ENCODE measurements at regions of chr1 and their contacts with region 1.

Region 1: GRCh38 chr1:40449684-40450494 is at the start of gene ZFP69B:
- DNase-seq: peak; percentile 94
- H3K4me3 Mint-ChIP-seq: peak within 1 kb of the TSS; percentile 78
- H3K27ac Mint-ChIP-seq: peak within 1 kb of the TSS; percentile 97
- H3K4me1 Mint-ChIP-seq: peaks cover 32% of the 10 kb centered on the region
- H3K27me3 Mint-ChIP-seq: no peaks in the 10 kb centered on the region
- total RNA-seq, gene ZFP69B: 4.8 to 5.7 TPM

Region 2: DNA sequence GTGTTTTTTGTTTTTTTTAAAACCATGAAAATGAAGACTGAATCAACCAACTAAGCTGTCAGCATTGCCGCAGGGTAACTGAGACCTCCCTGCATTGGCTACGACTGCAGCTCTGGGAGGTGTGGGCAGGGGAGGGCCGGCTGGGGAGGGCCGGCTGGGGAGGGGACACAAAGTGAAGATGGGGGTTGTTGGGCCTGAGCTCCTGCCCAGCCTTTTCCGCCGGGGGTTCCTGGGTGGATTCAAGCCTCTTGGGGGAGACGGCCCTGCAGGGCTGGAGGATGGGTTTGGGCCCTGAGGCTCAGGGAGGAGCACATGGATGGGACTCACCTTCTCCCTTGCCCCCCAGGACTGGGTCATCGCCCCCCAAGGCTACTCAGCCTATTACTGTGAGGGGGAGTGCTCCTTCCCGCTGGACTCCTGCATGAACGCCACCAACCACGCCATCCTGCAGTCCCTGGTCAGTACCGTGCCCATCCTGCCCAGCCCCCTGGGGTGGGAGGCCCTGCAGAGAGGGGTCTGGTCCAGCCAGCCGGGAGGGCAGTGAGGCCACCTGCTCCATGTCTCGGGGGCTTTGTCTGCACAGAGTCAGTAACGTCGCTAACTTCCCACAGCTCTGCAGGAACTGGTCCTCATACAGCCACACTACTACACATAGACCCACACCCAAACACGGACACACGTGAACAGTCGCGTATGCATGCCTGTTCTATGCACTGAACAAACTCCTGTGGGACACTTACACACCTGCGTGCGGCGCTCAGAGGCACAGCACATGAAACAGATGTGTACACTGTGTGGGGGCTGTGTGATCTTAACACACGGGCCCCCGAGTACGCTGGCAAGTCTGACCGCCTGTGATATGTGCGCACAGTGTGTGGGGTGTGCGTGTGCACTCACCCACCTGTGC is 927.0 kb before region 1 on chr1:
- CTCF ChIA-PET with region 1: no interaction called
- POLR2A ChIA-PET with region 1: no interaction called
- intact Hi-C with region 1: no loop called
- DNase-seq: no peak
- H3K4me3 Mint-ChIP-seq: no peak overlapping the region
- H3K27ac Mint-ChIP-seq: no peak overlapping the region
- H3K4me1 Mint-ChIP-seq: peaks cover 5% of the 10 kb centered on the region
- H3K27me3 Mint-ChIP-seq: no peaks in the 10 kb centered on the region

Region 3: GRCh38 chr1:40257688-40258444 is 192.0 kb before region 1 on chr1 and contains the start of gene ZMPSTE24:
- CTCF ChIA-PET with region 1: no interaction called
- POLR2A ChIA-PET with region 1: no interaction called
- intact Hi-C with region 1: loop called (anchors 2 kb)
- DNase-seq: peak; percentile 98
- H3K4me3 Mint-ChIP-seq: peak within 1 kb of the TSS; percentile 86
- H3K27ac Mint-ChIP-seq: peak within 1 kb of the TSS; percentile 97
- H3K4me1 Mint-ChIP-seq: peaks cover 54% of the 10 kb centered on the region
- H3K27me3 Mint-ChIP-seq: no peaks in the 10 kb centered on the region
- total RNA-seq, gene ZMPSTE24: 29.5 to 30.5 TPM

Region 4: GRCh38 chr1:40385437-40386358 is 64.2 kb before region 1 on chr1:
- CTCF ChIA-PET with region 1: no interaction called
- POLR2A ChIA-PET with region 1: interaction called, 21 read pairs
- intact Hi-C with region 1: loop called (anchors 2 kb)
- DNase-seq: peak; percentile 77
- H3K4me3 Mint-ChIP-seq: peak overlapping the region; percentile 81
- H3K27ac Mint-ChIP-seq: peak overlapping the region; percentile 100
- H3K4me1 Mint-ChIP-seq: peaks cover 90% of the 10 kb centered on the region
- H3K27me3 Mint-ChIP-seq: no peaks in the 10 kb centered on the region

Region 5: DNA sequence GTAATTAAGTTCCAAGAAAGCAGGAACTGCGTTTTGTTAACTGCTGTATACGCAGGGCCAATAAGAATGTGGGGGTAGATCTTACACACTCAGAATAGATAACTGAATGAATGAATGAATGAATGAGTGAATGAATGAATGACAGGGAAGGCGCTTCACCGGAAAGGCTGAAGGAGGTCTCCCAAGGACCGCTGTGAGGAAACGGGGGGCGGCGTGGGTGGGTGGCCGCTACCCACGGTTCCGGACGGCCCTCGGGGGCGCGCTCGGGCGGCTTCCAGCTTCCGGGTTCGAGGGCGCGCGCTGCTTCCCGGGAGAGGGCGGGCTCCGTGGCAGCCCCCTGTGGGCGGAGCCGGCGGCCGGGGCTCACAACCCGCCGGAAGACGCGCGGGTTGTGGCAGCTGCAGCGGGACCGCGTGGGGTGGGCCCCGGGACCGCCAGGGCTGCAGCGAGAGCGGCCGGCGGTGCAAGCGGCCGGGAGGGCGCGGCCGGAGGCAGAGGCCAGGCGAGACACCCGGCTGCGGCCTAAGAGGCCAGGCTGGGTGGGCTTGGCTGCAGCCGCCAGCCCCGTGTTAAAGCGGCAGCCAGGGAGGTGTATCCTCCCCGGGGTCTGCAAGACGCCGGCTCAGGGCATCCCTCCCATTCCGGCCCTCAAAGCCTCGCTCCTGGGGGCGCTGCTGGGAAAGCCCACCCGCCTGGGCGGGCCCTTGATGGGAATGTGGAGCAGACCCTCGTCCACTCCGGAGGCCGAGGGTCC is 27.2 kb after region 1 on chr1 and contains the start of gene ZFP69:
- CTCF ChIA-PET with region 1: interaction called, 6 read pairs
- POLR2A ChIA-PET with region 1: interaction called, 13 read pairs
- intact Hi-C with region 1: loop called (anchors 1 kb)
- DNase-seq: peak; percentile 77
- H3K4me3 Mint-ChIP-seq: peak within 1 kb of the TSS; percentile 78
- H3K27ac Mint-ChIP-seq: peak within 1 kb of the TSS; percentile 65
- H3K4me1 Mint-ChIP-seq: peaks cover 19% of the 10 kb centered on the region
- H3K27me3 Mint-ChIP-seq: no peaks in the 10 kb centered on the region
- total RNA-seq, gene ZFP69: 3.9 to 4.5 TPM

Region 6: DNA sequence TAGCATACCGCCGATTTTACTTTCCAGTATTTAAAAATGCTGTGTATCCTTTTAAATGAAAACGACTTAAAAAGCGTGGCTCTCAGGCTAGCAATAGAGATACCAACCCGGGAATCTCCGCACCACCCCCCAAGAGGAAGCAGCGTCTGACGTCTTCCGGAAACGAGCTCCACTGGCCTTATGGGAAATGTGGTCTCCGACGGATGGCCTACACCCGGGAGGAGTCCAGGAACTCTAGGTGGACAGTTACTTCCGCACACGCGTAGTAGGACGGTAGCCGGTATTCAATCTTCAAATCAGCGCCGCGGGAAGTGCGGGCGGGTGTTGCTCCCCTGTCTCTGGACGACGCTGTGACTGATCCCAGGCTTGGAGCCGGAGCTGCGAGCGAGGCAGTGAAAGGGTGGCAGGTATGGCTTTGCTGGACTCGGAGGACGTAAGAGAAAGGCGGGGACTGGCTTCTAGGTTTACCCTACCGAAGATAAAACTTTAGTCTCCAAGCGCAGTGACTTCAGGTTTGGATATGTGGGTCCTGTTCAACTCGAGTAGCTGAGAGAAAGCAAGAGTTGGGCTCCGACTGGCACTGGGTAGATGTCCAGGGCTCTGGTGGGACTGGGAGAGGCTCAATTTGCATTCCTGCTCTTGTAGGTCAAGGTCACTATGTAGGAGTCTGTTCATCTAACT is 81.6 kb after region 1 on chr1 and contains the start of gene ZNF684:
- CTCF ChIA-PET with region 1: interaction called, 10 read pairs
- POLR2A ChIA-PET with region 1: interaction called, 10 read pairs
- intact Hi-C with region 1: loop called (anchors 1 kb)
- DNase-seq: peak; percentile 92
- H3K4me3 Mint-ChIP-seq: peak within 1 kb of the TSS; percentile 96
- H3K27ac Mint-ChIP-seq: peak within 1 kb of the TSS; percentile 84
- H3K4me1 Mint-ChIP-seq: peaks cover 19% of the 10 kb centered on the region
- H3K27me3 Mint-ChIP-seq: peaks cover 2% of the 10 kb centered on the region
- total RNA-seq, gene ZNF684: 4.8 to 5.9 TPM

Measured in activated CD4-positive, alpha-beta memory T cell treated with anti-CD3 and anti-CD28 coated beads for 36 hours (primary cell).